ENCODE measurements at regions of chr7 and their contacts with region 1.

Region 1: DNA sequence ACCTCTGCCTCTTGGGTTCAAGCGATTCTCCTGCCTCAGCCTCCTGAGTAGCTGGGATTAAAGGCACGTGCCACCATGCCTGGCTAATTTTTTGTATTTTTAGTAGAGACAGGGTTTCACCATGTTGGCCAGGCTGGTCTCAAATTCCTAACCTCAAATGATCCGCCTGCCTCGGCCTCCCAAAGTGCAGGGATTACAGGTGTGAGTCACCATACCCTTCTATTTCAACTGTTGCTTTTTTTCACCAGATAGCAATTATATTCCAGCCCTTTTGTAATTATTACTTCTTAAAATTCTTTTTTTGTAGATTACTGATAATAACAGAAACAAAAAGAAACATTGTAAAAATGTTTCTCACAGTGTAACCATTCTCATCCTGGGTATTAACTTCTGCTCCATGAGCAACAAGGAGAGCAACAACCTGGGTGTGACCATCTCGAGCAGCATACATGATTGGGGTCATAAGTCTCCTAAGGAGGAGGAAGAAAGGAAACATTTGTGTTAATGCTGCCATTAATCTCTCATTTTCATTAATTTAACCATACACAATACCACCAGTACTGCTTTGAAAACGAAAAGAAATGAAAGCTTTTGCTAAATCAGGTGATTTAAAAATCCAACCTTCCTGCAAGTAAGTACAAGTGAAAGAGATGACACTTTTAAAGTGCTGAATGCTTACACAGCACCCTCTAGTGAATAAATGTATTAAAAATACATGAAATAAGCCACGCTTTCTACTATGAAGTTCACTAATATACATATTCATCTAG is 41.8 kb downstream of the ASZ1 start:
- DNase-seq: no peak
- ATAC-seq: peak; percentile 61 to 77 (median 70)
- H3K4me3 ChIP-seq: no peak overlapping the region
- H3K27ac ChIP-seq: no peak overlapping the region
- H3K4me1 ChIP-seq: no peaks in the 10 kb centered on the region
- H3K27me3 ChIP-seq: no peaks in the 10 kb centered on the region
- CTCF ChIP-seq: peak; percentile 33 to 51 (median 51)
- POLR2A ChIP-seq: no peak

Region 2: DNA sequence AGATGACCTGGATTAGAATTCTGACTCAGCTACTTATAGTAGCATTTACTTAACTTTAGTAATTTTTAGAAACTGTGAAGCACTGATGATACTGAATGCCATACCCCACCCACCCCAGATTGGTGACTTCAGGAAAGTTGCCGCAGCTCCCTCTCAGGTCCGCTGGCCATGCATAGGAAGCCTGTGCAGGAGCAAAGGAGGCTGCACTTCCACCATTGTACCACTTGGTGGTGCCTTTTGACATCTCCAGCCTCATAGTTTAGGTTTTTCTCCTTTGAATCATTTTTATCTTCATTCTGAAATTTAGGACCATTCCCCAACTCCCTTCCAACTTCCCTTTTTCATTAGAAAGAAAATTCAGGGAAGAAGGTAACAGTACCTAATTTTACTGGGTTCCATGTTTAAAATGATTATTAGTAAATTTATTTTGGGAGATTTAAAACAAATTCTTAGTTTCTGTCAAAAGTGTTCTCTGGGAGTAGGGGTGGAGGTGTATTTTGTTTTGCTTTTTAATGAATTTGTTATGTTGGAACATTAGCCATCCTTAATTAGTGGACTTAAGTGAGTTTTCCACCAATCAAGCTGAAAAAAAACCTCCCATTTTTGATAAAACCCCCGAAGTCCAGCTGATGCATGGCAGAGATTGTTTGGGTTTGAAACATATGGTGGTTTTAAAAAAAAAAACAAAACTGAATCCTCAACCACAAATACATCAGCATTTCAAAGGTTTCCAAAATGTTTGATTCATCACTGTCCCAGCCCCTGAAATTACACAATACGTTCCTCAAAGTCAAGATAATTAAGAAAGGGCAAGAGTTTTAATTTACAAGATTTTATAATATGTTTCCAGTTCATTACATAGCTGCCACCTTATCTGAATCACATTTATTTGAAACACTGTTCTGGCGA is 172.3 kb before region 1 on chr7:
- intact Hi-C with region 1: loop called in 1 of 2 experiments (anchors 10 kb)
- DNase-seq: peak in 2 of 3 donors; percentile 41 to 55
- ATAC-seq: peak; percentile 89 to 92 (median 91)
- H3K4me3 ChIP-seq: no peak overlapping the region
- H3K27ac ChIP-seq: no peak overlapping the region
- H3K4me1 ChIP-seq: no peaks in the 10 kb centered on the region
- H3K27me3 ChIP-seq: no peaks in the 10 kb centered on the region
- CTCF ChIP-seq: peak; percentile 62 to 92 (median 88)
- POLR2A ChIP-seq: no peak